Vagina (tissue), 2 donors: ENCODE measurements at regions of chr1 and their contacts with region 1.

Region 1: DNA sequence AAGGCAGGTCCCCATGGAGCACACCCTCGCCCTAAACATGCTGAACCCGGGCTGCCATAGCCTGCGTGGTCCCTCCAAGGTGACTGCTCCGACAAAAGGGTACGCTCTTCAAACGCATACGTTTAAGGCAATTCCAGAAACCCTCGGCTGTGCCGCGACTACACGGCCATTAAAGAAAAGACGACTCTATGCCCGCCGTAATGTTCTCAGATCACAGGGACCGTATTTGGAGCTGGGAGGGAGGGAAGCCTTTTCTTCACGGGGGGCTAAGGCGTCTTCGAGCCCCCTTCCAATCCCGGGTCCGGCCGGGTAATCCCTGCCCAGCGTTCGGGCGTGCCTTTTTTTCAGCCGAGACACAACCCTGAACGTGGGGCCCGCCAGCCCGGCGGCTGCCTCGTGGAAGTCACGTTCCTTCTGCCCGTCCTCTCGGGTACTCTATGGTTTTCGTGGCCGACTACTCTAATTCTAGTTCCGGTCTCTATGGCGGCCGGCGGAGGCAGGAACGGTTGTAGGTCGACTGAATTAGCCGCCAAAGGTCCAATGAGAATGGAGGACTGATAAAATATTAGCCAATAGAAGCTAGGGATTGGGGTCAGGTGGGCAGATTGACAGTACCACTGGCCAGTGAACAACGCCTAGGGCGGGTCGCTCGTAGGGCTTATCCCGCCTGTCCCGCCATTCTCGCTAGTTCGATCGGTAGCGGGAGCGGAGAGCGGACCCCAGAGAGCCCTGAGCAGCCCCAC is at the start of gene YBX1:
- DNase-seq: peak; percentile 98 to 99
- H3K4me3 ChIP-seq: peak within 1 kb of the TSS; percentile 83 to 98
- H3K27ac ChIP-seq: peak within 1 kb of the TSS; percentile 97
- H3K4me1 ChIP-seq: peaks cover 50% of the 10 kb centered on the region
- H3K27me3 ChIP-seq: no peaks in the 10 kb centered on the region
- CTCF ChIP-seq: no peak
- POLR2A ChIP-seq: peak in 1 of 2 donors; percentile 56
- total RNA-seq, gene YBX1: 397 TPM

Region 2: GRCh38 chr1:42766741-42767509 is 85.0 kb after region 1 on chr1 and contains the starts of genes C1orf50 and P3H1:
- intact Hi-C with region 1: loop called (anchors 5 kb)
- DNase-seq: peak; percentile 99 to 100
- H3K4me3 ChIP-seq: peak within 1 kb of the TSS; percentile 78 to 85
- H3K27ac ChIP-seq: peak within 1 kb of the TSS; percentile 87
- H3K4me1 ChIP-seq: peaks cover 51% of the 10 kb centered on the region
- H3K27me3 ChIP-seq: no peaks in the 10 kb centered on the region
- CTCF ChIP-seq: no peak
- POLR2A ChIP-seq: peak; percentile 37 to 97
- total RNA-seq, gene C1orf50: 3.2 TPM
- total RNA-seq, gene P3H1: 40.5 TPM

Region 3: GRCh38 chr1:42924082-42924850 is 242.4 kb after region 1 on chr1:
- intact Hi-C with region 1: loop called (anchors 5 kb)
- DNase-seq: peak in 1 of 2 donors; percentile 96
- H3K4me3 ChIP-seq: peak overlapping the region; percentile 80 to 91
- H3K27ac ChIP-seq: peak overlapping the region; percentile 93
- H3K4me1 ChIP-seq: peaks cover 17% of the 10 kb centered on the region
- H3K27me3 ChIP-seq: no peaks in the 10 kb centered on the region
- CTCF ChIP-seq: peak in 2 of 3 experiments; percentile 4 to 26
- POLR2A ChIP-seq: peak in 1 of 2 donors; percentile 69